Activated CD4-positive, alpha-beta T cell treated with anti-CD3 and anti-CD28 coated beads, Interleukin-2, amount 10 ng/mL, durations not matched to agents 7 days and 5 days (primary cell): ENCODE measurements at regions of chr13 and their contacts with region 1.

Region 1: DNA sequence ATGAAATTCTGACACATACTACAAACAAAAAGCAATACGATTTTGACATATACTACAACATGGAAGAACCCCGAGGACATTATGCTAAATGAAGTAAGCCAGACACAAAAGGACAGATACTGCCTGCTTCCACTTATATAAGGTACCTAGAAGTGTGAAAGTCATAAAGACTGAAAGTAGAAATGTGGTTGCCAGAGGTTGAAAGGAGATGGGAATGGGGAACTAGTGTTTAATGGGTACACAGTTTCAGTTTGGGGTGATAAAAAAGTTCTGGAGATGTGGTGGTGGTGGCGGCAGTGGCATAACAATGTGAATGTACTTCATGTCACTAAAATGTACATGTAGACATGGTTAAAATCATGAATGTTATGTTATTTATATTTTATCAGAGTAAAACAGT is 12.1 kb upstream of the NDFIP2 start:
- DNase-seq: no peak
- H3K4me3 Mint-ChIP-seq: no peak overlapping the region
- H3K27ac Mint-ChIP-seq: no peak overlapping the region
- H3K4me1 Mint-ChIP-seq: no peaks in the 10 kb centered on the region
- H3K27me3 Mint-ChIP-seq: no peaks in the 10 kb centered on the region

Region 2: DNA sequence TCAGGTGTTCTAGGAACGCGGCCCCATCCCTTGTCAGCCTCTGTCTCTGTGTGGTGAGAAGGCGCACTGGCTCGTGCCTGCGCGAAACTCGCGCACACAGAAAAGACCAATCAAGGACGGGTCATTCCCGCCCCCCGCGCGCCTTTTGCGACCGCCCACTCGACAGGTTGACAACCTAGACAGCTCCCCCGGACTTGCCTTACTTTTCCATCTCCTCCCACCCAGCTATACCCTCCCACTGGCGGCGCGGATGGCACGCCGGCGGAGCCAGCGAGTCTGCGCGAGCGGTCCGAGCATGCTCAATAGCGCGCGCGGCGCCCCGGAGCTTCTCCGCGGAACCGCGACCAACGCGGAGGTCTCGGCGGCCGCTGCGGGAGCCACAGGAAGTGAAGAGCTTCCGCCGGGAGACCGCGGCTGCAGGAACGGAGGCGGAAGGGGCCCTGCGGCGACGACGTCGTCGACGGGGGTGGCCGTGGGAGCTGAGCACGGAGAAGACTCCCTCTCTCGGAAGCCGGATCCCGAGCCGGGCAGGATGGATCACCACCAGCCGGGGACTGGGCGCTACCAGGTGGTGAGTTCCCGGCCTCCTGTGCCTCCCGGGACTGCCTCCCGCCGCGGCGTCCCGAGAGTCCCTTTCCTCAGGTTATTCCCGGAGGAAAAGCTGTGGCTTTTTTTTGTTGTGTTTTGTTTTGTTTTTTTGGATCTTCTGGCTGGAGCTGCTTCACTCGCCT is 12.3 kb after region 1 on chr13 and contains the start of gene NDFIP2:
- CTCF ChIA-PET with region 1: interaction called, 10 read pairs
- POLR2A ChIA-PET with region 1: interaction called, 5 read pairs
- DNase-seq: peak; percentile 82
- H3K4me3 Mint-ChIP-seq: peak within 1 kb of the TSS; percentile 81
- H3K27ac Mint-ChIP-seq: peak within 1 kb of the TSS; percentile 85
- H3K4me1 Mint-ChIP-seq: peaks cover 53% of the 10 kb centered on the region
- H3K27me3 Mint-ChIP-seq: peaks cover 34% of the 10 kb centered on the region
- total RNA-seq, gene NDFIP2: 17.8 to 21.2 TPM